ENCODE measurements at regions of chr21 and their contacts with region 1.

Region 1: GRCh38 chr21:26245428-26245827 is 74.9 kb upstream of the APP start:
- DNase-seq: no peak
- ATAC-seq: no peak
- H3K4me3 Mint-ChIP-seq: no peak overlapping the region
- H3K27ac Mint-ChIP-seq: no peak overlapping the region
- H3K4me1 Mint-ChIP-seq: no peaks in the 10 kb centered on the region
- H3K27me3 Mint-ChIP-seq: no peaks in the 10 kb centered on the region
- CTCF ChIP-seq: no peak

Region 2: DNA sequence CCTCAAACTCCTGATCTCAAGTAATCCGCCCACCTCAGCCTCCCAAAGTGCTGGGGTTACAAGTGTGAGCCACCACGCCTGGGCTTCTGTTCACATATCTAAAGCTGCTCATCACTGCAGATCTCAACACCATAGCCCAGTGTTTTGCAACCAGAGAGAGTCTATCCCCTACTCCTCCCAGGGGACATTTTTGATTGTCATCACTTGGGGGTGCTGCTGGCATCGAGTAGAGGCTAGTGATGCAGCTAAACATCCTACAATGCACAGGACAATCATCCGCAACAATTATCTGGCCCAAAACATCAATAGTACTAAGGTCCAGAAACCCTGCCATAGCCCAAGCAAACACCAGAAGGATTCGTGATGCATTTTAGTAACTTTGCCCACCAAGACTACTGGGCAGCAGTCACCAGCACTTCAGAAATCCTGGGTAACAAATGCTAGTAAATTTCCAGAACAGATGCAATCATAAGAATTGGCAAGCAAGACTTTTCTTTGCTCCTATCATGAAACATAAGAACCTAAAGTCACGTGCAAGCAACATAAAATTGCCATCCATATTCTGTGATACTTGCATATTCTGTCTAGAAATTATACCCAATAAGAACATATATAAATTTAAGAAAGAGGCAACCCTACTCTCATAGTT is 234.0 kb before region 1 on chr21:
- CTCF ChIA-PET with region 1: no interaction called
- POLR2A ChIA-PET with region 1: no interaction called
- intact Hi-C with region 1: no loop called
- DNase-seq: no peak
- ATAC-seq: no peak
- H3K4me3 Mint-ChIP-seq: no peak overlapping the region
- H3K27ac Mint-ChIP-seq: no peak overlapping the region
- H3K4me1 Mint-ChIP-seq: no peaks in the 10 kb centered on the region
- H3K27me3 Mint-ChIP-seq: no peaks in the 10 kb centered on the region
- CTCF ChIP-seq: no peak

Region 3: DNA sequence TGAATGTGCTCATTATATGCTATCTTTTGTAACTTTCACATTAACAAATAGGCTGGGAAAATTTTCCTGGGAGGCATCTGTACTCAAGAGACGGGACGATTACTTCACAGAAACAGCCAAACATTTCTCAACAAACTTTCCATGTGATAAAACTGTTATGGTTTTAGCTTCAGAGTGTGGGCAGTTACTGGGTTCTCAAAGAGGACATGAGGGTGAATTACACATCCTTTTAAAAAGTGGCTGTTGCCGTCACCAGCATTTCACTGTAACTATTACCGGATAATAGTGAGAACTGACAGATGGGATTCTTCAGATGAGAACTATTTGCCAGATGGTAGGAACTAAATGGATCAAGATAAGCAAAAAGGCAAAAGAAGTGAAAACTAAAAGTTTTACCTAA is 184.0 kb before region 1 on chr21:
- CTCF ChIA-PET with region 1: no interaction called
- POLR2A ChIA-PET with region 1: interaction called, 11 read pairs
- intact Hi-C with region 1: no loop called
- DNase-seq: no peak
- ATAC-seq: no peak
- H3K4me3 Mint-ChIP-seq: no peak overlapping the region
- H3K27ac Mint-ChIP-seq: no peak overlapping the region
- H3K4me1 Mint-ChIP-seq: no peaks in the 10 kb centered on the region
- H3K27me3 Mint-ChIP-seq: no peaks in the 10 kb centered on the region
- CTCF ChIP-seq: no peak

Measured in activated B cell treated with CpG ODN at 0.5 μM for 24 hours (primary cell).